ENCODE measurements at regions of chr1 and their contacts with region 1.

Region 1: DNA sequence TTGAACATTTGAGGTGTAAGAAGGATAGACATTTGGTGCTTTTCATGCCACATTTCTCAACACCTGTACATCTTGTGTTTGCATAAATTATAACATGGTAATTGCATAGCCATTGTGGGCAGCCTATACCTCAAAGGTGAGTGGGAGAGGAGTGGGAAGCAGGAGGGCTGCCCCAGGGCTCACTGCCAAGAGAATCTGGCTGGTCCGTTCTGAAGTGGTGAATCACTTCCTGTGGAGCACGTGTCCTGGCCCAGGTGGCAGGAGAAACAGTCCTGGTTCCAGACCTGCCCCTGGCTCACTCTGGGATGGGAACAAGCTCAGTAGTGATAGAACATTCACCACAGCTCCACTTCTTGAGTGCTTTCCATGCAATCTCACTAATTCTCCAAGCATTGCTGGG is 11.6 kb upstream of the OLFML2B start:
- DNase-seq: peak in 1 of 3 donors; percentile 48
- ATAC-seq: peak in 1 of 4 donors; percentile 71
- H3K4me3 ChIP-seq: no peak overlapping the region
- H3K27ac ChIP-seq: no peak overlapping the region
- H3K4me1 ChIP-seq: no peaks in the 10 kb centered on the region
- H3K27me3 ChIP-seq: no peaks in the 10 kb centered on the region
- CTCF ChIP-seq: no peak
- POLR2A ChIP-seq: no peak

Region 2: GRCh38 chr1:161792740-161793139 is 242.5 kb before region 1 on chr1:
- intact Hi-C with region 1: loop called in 1 of 2 experiments (anchors 10 kb)
- DNase-seq: no peak
- ATAC-seq: peak; percentile 86 to 96 (median 90)
- H3K4me3 ChIP-seq: no peak overlapping the region
- H3K27ac ChIP-seq: no peak overlapping the region
- H3K4me1 ChIP-seq: no peaks in the 10 kb centered on the region
- H3K27me3 ChIP-seq: no peaks in the 10 kb centered on the region
- CTCF ChIP-seq: peak; percentile 55 to 57 (median 56)
- POLR2A ChIP-seq: no peak

Region 3: DNA sequence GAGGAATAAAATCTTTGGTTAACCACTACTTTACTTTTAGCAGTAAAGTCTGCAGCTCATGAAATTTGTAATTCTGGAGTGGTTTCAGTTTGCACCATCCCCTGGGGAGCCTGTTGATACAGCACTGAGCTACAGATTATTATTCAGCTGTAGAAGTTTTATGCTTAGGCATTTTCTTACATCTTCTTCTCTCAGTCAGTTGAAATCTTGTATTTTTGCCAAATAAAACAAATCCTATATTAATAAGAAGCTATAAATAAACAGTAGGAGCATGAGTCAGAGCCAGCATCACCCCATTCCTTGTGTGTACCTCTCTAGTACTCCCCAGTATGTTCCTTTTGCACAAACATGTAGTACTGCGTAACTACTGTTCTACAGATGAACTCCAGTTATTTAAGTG is 150.2 kb before region 1 on chr1:
- intact Hi-C with region 1: no loop called
- DNase-seq: no peak
- ATAC-seq: no peak
- H3K4me3 ChIP-seq: no peak overlapping the region
- H3K27ac ChIP-seq: no peak overlapping the region
- H3K4me1 ChIP-seq: no peaks in the 10 kb centered on the region
- H3K27me3 ChIP-seq: no peaks in the 10 kb centered on the region
- CTCF ChIP-seq: no peak
- POLR2A ChIP-seq: no peak

Region 4: DNA sequence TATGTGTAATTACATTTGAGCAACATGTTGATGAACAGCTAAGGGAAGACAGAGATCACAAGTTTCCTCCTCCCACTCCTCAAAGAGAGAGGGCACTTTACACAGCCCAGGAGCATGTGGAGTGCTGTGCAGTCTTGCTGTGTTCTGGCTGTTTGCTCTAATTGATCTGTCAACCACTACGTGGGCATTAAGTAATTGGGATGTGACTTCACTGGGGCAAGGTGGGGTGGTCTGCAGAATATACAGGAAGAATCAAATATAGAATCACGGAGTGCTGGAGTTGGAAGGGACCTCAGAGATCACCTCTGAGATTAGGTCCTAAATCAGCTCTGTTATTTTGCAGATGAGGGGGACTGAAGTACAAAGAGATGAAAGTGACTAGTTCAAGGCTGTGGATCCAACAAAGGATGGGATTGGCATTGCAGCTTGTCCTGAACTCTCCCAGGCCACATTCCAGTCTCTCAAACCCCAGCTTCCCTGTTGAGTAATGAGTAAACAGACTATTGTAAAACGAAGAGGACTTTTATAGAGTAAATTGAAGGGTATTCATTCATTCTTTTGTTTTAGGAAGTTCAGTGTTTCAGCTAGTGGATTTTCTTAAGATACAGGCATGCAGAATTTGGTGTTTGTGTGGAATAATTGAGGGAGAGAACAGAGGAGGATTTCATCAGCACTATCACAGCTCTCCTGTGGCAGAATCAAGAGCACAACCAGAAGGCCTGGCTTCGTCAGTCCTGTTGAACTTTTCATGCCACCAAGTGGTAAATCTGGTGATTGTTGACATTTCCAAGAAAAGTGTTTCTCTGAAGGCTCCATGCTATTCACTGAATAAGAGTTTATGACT is 56.7 kb after region 1 on chr1:
- intact Hi-C with region 1: no loop called
- DNase-seq: no peak
- ATAC-seq: peak; percentile 77 to 85 (median 80)
- H3K4me3 ChIP-seq: peak overlapping the region in 1 of 3 donors; percentile 5
- H3K27ac ChIP-seq: peak overlapping the region in 2 of 3 donors; percentile 38 to 76
- H3K4me1 ChIP-seq: peaks cover 0 to 52% (median 23%) of the 10 kb centered on the region in 4 donors
- H3K27me3 ChIP-seq: no peaks in the 10 kb centered on the region
- CTCF ChIP-seq: no peak
- POLR2A ChIP-seq: no peak

Measured in right lobe of liver (tissue), 6 donors.